ENCODE measurements at regions of chr14 and their contacts with region 1.

Region 1: GRCh38 chr14:44897045-44897844 is 64.5 kb downstream of the KLHL28 start:
- DNase-seq: peak; percentile 99
- H3K4me3 Mint-ChIP-seq: peak overlapping the region; percentile 87
- H3K27ac Mint-ChIP-seq: peak overlapping the region; percentile 83
- H3K4me1 Mint-ChIP-seq: peaks cover 14% of the 10 kb centered on the region
- H3K27me3 Mint-ChIP-seq: no peaks in the 10 kb centered on the region

Region 2: DNA sequence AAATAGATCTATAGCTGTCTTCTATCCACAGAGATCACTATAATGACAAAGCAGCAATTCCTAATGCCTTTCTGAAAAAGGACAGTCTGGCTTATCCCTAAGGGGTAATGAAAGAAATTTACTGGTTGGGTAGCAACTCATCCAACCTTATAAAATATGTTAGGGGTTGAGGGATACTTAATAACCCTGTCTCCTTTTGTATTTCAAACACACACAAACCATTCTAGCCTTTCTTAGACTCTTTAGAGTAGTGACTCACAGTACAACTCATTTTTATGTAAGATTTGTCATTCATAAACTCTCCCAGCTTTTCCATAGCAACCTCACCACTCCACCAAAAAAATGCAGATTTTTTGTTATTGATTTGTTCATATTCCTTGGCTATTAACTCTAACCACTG is 558.0 kb before region 1 on chr14:
- CTCF ChIA-PET with region 1: no interaction called
- POLR2A ChIA-PET with region 1: no interaction called
- intact Hi-C with region 1: no loop called
- DNase-seq: no peak
- H3K4me3 Mint-ChIP-seq: no peak overlapping the region
- H3K27ac Mint-ChIP-seq: no peak overlapping the region
- H3K4me1 Mint-ChIP-seq: no peaks in the 10 kb centered on the region
- H3K27me3 Mint-ChIP-seq: no peaks in the 10 kb centered on the region

Region 3: GRCh38 chr14:44886860-44887595 is 10.2 kb before region 1 on chr14:
- CTCF ChIA-PET with region 1: no interaction called
- POLR2A ChIA-PET with region 1: no interaction called
- intact Hi-C with region 1: no loop called
- DNase-seq: no peak
- H3K4me3 Mint-ChIP-seq: no peak overlapping the region
- H3K27ac Mint-ChIP-seq: no peak overlapping the region
- H3K4me1 Mint-ChIP-seq: peaks cover 3% of the 10 kb centered on the region
- H3K27me3 Mint-ChIP-seq: no peaks in the 10 kb centered on the region

Region 4: DNA sequence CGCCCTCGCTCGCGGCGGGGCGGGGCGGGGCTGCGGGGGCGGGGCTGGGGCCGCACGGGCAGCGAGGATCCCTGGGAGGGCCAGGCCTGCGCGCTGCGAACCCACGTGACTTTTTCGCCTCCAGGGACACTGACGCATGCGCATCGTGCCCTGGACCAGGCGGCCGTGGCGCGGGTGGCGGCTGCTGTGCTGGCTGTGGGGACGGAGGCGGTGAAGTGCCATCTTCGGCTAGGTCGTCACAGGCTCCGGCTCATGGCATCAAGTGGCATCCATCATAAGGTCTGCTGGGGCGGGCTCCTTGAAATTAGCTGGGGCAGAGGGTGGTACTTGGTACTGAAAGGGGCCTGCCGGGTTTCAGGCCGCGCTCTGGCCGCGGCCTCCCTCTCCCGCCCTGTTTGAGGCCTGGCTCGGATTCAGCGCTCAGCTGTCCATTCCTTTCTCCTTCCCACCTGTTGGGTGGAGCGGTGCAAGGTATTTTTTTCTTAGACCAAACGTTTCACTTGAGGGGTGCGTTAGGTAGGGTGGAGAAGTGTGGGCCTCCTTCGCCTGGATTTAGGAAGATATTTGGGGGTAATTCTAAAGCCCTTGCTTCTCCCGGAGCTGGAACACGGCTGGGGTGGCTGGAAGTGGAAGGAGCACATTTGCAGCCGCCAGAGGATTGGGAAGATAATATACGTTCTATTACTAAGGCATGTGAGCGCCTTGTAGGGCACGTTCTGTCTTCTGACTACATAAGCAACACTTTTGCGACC is 186.9 kb after region 1 on chr14 and contains the start of gene PRPF39:
- CTCF ChIA-PET with region 1: no interaction called
- POLR2A ChIA-PET with region 1: no interaction called
- intact Hi-C with region 1: loop called (anchors 1 kb)
- DNase-seq: peak; percentile 97
- H3K4me3 Mint-ChIP-seq: peak within 1 kb of the TSS; percentile 95
- H3K27ac Mint-ChIP-seq: peak within 1 kb of the TSS; percentile 95
- H3K4me1 Mint-ChIP-seq: peaks cover 41% of the 10 kb centered on the region
- H3K27me3 Mint-ChIP-seq: no peaks in the 10 kb centered on the region
- total RNA-seq, gene PRPF39: 38.9 to 40.9 TPM

Region 5: GRCh38 chr14:45267071-45267470 is 369.8 kb after region 1 on chr14:
- CTCF ChIA-PET with region 1: interaction called, 4 read pairs
- POLR2A ChIA-PET with region 1: no interaction called
- intact Hi-C with region 1: loop called (anchors 5 kb)
- DNase-seq: no peak
- H3K4me3 Mint-ChIP-seq: no peak overlapping the region
- H3K27ac Mint-ChIP-seq: no peak overlapping the region
- H3K4me1 Mint-ChIP-seq: no peaks in the 10 kb centered on the region
- H3K27me3 Mint-ChIP-seq: peaks cover 6% of the 10 kb centered on the region

Measured in activated CD4-positive, alpha-beta memory T cell treated with anti-CD3 and anti-CD28 coated beads for 36 hours (primary cell).